Mucosa of descending colon (tissue), 3 donors: ENCODE measurements at regions of chr2 and their contacts with region 1.

Region 1: DNA sequence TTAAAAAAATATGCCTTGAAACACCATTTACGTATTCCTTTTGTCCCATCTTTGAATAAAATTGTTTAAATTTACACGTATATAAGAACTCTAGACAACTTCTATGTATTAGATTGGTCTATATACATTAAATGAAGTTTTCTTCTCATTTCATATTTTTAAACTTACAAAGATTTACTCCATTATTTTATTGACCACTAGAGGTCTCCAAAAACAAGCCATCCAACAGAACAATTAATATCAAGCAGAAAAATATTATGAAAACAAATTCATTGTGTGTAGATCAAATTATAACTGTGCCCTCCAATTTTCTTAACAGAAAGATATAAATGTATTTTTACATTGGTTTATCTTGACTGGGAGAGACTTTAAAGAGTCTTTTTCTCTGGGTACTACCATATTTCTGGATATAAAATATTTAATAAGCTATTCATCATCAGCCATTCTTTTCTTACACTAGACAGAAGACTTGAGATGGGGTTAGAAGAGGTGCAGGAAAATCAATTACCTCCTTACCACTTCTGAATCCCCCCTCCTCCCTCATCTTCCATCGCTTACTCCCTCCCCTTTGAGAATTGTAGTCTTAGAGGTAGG is 66.5 kb downstream of the DPP4 start:
- DNase-seq: no peak
- ATAC-seq: no peak
- H3K4me3 ChIP-seq: no peak overlapping the region
- H3K4me1 ChIP-seq: no peaks in the 10 kb centered on the region
- CTCF ChIP-seq: peak; percentile 19

Region 2: GRCh38 chr2:161857920-161858319 is 149.6 kb before region 1 on chr2:
- intact Hi-C with region 1: no loop called
- DNase-seq: no peak
- ATAC-seq: no peak
- H3K4me3 ChIP-seq: no peak overlapping the region
- H3K4me1 ChIP-seq: no peaks in the 10 kb centered on the region
- CTCF ChIP-seq: no peak

Region 3: DNA sequence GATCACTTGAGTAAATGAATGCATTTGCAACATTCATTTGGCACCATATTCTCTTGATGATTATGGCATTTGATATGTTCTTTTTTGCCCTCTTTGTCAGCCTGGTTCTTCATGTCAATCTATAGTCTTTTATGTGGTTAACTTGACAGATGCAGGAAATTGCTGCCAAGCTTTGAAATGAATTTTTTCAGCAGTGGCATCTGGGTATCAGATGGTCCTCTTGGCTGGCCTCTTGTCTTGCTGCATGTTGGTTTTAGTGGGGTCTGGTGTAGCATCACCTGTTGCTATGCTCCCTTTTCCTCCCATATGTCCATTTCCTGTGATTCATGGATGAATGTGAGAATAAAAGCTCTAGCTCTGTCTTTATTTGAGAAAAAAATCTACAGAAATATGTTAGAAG is 53.4 kb before region 1 on chr2:
- intact Hi-C with region 1: no loop called
- DNase-seq: no peak
- ATAC-seq: no peak
- H3K4me3 ChIP-seq: no peak overlapping the region
- H3K4me1 ChIP-seq: no peaks in the 10 kb centered on the region
- CTCF ChIP-seq: no peak

Region 4: DNA sequence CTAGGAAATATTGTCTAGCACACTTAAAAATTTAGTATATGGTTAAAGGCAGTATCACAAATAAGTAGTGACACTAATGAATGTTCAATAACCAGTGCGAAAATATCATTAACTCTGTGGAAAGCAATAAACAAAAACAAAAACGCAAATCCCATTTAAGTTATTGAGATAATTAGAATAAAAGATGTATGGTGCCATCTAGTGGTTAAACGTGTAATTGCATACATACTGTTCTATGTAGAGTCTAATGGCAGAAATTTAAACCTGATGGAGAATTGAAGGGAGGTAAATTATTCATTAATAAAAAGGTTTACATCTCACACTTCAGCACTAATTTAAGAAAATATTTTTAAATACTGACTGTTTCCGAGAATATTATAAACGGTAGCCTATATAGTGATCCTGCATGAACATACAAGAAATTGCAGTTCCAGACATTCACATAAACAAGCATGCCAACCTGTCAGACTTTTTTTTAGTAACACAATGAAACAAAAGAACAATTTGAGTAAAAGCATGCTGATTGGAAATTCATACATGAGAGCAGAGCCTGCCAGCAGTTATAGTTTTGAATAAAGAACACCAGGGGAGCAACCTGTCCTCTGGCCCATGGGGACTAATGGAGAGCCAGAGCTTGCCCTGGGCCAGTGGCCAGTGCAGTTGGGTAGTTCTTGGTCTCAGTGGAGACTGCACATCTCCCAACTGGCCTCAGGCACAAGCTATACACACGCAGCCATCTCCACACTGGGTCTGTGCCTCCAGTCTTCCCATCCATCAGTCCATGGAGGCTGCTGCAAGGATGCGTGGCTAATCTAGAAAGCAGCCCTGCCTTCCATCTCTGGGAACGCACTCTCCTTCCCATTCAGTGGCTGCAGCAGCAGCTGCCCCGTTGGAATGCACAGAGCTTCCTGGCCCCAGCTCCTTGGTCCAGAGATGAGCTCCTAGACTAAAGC is 116.5 kb after region 1 on chr2:
- intact Hi-C with region 1: loop called (anchors 5 kb)
- DNase-seq: peak in 1 of 3 donors; percentile 34
- ATAC-seq: peak; percentile 70
- H3K4me3 ChIP-seq: no peak overlapping the region
- H3K4me1 ChIP-seq: no peaks in the 10 kb centered on the region
- CTCF ChIP-seq: peak; percentile 42

Region 5: GRCh38 chr2:162164802-162165201 is 157.3 kb after region 1 on chr2:
- intact Hi-C with region 1: no loop called
- DNase-seq: no peak
- ATAC-seq: no peak
- H3K4me3 ChIP-seq: no peak overlapping the region
- H3K4me1 ChIP-seq: no peaks in the 10 kb centered on the region
- CTCF ChIP-seq: no peak